ENCODE measurements at regions of chr1 and their contacts with region 1.

Region 1: DNA sequence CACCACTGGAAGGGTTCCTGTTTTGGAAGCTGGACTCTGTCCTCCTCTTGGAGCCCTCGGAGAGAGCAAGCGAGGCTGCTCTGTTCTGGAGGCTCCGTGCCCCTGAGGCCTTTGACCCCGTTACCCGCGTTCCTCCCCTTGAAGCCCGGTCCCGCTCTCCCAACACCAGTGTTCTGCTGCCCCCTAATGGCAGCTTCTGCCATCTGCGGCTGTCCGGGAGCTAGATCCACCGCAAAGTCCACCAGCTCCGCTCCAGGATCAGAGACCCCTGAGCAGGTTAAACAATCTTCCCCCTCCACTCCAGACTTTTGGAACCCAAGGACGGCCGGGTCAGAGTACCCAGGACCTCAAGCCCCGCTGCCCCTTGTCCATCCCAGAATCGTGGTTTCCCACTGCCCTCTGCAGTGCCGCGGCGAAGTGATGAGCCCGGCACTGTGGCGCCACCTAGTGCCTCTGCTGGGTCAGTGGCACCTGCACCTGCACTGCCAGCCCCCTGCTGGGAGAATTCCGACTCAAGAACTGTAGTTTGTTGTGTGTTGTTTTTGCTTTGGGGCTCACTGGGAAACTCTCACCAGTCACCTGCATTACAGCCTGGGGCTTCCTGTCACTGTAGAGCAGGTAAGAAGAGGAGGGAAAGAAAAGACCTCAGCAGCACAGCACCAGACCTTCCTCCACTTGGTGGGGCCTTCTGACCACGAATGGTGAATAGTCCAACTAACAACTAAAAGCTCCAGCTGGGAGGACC is 63.5 kb upstream of the NFASC start:
- DNase-seq: peak; percentile 90
- CTCF ChIP-seq: peak; percentile 99

Region 2: DNA sequence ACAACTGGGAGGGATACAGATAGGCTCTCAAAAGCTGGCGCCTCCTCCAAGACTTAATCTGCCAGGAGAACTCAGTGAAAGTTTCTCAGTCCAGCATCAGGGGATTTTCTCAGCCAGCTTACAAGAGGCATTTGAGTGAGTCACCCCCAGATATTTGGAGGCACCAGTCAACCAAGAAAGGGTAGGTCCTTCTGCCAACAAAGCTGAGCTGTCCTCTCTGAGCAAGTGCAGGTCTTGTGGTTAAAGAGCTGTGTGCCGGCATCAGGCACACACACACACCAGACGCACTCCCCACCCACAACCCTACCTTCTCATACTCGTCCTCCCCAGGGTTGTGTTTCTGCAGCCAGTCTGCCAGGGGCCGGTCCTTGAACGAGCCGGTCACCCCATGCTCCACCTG is 368.5 kb before region 1 on chr1:
- CTCF ChIA-PET with region 1: interaction called, 25 read pairs
- POLR2A ChIA-PET with region 1: no interaction called
- DNase-seq: no peak
- CTCF ChIP-seq: no peak

Region 3: DNA sequence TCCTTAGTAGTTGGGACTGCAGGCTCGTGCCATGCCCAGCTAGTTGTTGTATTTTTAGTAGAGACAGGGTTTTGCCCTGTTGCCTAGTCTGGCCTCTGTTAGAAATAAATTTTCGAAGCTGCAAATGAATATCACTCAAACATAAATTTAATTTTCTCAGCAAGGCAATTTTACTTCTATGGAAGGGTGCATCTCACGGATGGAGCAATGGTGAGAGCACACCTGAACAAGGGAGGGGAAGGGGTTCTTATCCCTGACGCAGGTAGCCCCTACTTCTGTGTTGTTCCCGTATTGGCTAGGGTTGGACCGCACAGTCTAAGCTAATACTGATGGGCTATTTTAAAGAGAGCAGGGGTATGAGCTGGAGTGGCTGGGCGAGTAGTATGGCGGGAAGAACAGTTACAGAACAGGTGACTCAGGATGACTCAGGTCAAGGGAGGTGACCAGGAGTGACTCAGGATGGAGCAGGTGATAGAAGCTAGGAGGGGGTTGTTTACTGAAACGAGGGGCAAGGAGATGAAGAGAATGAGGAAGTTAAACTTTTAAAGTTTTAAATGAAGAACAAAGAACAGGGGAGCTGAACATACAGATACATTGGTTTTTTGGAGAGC is 283.4 kb before region 1 on chr1:
- CTCF ChIA-PET with region 1: interaction called, 11 read pairs
- POLR2A ChIA-PET with region 1: no interaction called
- DNase-seq: no peak
- CTCF ChIP-seq: no peak

Region 4: GRCh38 chr1:204565617-204566582 is 241.2 kb before region 1 on chr1:
- CTCF ChIA-PET with region 1: interaction called, 141 read pairs
- POLR2A ChIA-PET with region 1: no interaction called
- DNase-seq: peak; percentile 80
- CTCF ChIP-seq: peak; percentile 61

Region 5: DNA sequence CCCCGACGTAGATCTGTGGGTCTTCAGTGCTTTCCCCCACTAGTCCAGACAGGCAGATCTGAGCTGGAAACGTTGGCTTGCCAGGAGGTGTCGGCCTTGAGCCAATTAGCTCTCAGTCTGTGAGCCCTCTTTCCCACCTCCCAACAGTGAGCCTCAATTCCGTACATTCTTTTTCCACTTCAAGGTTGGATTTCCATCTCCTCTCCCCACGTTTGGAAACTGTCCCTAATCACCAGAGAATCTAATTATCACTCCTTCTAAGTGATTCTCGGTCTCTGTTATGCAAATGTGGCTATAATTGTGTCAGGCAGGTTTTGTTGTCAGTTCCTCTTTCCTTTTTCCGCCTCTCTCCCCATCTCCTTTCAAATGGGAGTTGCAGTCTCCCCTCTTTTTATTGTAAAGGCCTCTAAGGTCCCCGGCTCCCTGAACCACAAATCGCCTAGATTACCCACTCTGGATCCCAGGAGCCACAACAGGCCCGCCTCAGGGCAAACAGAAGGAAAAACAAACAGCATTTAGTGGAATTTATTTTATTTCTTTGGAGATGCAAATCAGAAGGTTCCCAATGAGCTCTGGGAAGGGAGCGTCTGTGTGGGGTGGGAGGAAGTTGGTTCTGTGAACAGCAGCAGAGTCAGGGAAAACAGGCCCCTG is 92.1 kb before region 1 on chr1:
- CTCF ChIA-PET with region 1: interaction called, 15 read pairs
- POLR2A ChIA-PET with region 1: no interaction called
- DNase-seq: peak; percentile 55
- CTCF ChIP-seq: peak; percentile 27

Region 6: GRCh38 chr1:204773236-204773635 is 33.9 kb before region 1 on chr1:
- CTCF ChIA-PET with region 1: interaction called, 14 read pairs
- POLR2A ChIA-PET with region 1: no interaction called
- DNase-seq: no peak
- CTCF ChIP-seq: no peak

Region 7: GRCh38 chr1:204837440-204838084 is 30.4 kb after region 1 on chr1:
- CTCF ChIA-PET with region 1: interaction called, 225 read pairs
- POLR2A ChIA-PET with region 1: no interaction called
- DNase-seq: peak; percentile 32
- CTCF ChIP-seq: no peak